ENCODE measurements at regions of chr13 and their contacts with region 1.

Region 1: GRCh38 chr13:36395280-36395679 is 37.0 kb upstream of the CCNA1 start:
- DNase-seq: no peak
- H3K4me3 ChIP-seq: peak overlapping the region in 1 of 59 donors; percentile 3
- H3K27ac ChIP-seq: peak overlapping the region in 2 of 59 donors; percentile 12 to 24
- H3K27me3 ChIP-seq: peaks cover 0 to 2% (median 0%) of the 10 kb centered on the region in 45 donors
- CTCF ChIP-seq: peak in 55 of 56 donors; percentile 31 to 87 (median 62)

Region 2: GRCh38 chr13:36057029-36057428 is 338.3 kb before region 1 on chr13:
- intact Hi-C with region 1: no loop called
- DNase-seq: no peak
- H3K4me3 ChIP-seq: no peak overlapping the region
- H3K27ac ChIP-seq: no peak overlapping the region
- H3K27me3 ChIP-seq: no peaks in the 10 kb centered on the region
- CTCF ChIP-seq: no peak

Region 3: GRCh38 chr13:36282818-36283445 is 112.3 kb before region 1 on chr13:
- intact Hi-C with region 1: loop called (anchors 10 kb)
- DNase-seq: no peak
- H3K4me3 ChIP-seq: no peak overlapping the region
- H3K27ac ChIP-seq: no peak overlapping the region
- H3K27me3 ChIP-seq: no peaks in the 10 kb centered on the region
- CTCF ChIP-seq: peak; percentile 65 to 95 (median 85)

Region 4: DNA sequence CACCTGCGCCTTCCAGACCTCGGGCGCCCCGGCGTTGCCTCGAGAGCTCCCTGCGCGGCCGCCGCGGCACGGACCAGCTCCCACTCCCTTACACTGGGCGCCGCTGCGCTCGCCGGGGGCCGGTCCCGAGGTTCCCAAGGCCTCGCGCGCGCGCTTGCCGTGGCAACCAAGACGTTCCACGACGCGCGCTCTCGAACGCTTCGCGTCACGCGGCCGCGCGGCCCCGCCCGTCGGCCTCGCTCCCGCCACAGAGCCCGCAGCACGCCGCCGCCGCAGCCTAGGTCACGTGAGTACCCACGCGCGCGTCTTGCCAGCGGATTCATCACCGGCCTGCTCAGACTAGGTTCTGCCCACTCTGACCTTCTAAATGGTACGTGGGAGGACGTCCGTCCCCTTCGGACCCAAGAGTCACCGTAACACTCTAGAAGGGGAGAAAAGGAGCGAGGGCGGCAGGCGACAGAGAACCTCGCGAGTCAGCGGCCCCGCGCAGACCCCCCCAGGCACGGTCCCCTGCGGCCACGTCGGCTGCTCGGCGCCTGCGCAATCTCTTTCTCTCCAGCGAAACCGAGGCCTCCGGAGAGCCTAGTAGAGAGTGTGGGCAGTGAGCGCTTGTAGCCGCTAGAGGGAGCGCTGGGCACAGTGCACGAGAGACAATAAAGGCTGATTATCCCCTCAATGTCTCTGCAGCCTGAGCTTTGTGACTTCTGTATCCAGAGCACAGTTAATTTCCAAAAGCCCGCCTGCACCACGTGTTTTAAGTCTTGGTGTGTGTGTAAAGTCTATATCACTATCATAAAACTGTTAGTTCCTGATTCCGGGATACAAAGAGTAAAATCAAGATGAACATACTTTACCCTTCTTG is 48.8 kb before region 1 on chr13 and contains the start of gene SPART:
- intact Hi-C with region 1: loop called (anchors 1 kb)
- DNase-seq: peak; percentile 91 to 97 (median 94)
- H3K4me3 ChIP-seq: peak within 1 kb of the TSS; percentile 53 to 94 (median 82)
- H3K27ac ChIP-seq: peak within 1 kb of the TSS; percentile 90 to 100 (median 99)
- H3K27me3 ChIP-seq: no peaks in the 10 kb centered on the region
- CTCF ChIP-seq: peak in 55 of 56 donors; percentile 90 to 99 (median 98)
- total RNA-seq, gene SPART: 62.9 to 138 (median 86.2) TPM

Region 5: DNA sequence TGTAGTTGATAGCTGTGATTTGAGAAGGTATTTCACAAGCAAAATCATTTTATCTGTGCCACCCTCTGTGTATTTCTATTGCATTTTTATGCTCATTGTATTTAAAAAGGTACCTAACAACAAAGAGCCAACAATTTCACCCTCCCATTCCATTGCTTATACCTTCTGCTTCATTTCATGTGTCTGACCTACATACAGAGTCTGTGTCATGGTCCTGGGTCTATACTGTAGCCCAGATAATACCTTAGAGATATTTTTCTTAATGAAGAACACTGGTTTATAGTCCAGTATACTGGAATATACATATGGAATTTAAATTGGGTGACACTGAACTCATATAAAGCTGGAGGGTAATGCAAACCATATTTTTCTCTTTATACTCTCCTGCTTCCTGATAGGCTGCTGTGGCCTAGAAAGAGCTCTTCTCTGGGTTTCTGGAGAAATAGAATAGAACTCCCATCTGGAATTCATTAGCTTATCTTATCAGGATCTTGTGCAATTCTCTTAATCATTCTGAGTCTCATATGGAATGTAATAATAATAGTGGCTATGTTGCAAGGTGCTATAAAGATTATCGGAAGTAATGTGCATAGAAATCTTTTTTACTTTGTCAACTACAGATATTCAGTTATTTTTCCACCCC is 17.3 kb before region 1 on chr13:
- intact Hi-C with region 1: loop called in 1 of 2 experiments (anchors 2 kb)
- DNase-seq: no peak
- H3K4me3 ChIP-seq: no peak overlapping the region
- H3K27ac ChIP-seq: peak overlapping the region in 1 of 59 donors; percentile 17
- H3K27me3 ChIP-seq: peaks cover 0 to 4% (median 0%) of the 10 kb centered on the region in 45 donors
- CTCF ChIP-seq: no peak

Region 6: GRCh38 chr13:36520111-36520510 is 124.8 kb after region 1 on chr13:
- intact Hi-C with region 1: no loop called
- DNase-seq: no peak
- H3K4me3 ChIP-seq: no peak overlapping the region
- H3K27ac ChIP-seq: no peak overlapping the region
- H3K27me3 ChIP-seq: peaks cover 0 to 3% (median 0%) of the 10 kb centered on the region in 45 donors
- CTCF ChIP-seq: no peak

Measured in dorsolateral prefrontal cortex (tissue), 120 donors.